Activated T-helper 2 cell treated with anti-CD3 and anti-CD28 coated beads, Interferon-gamma antibody, Interleukin-2, Interleukin-4, amounts not matched to agents 10 μg/mL and 5 μg/mL and 100 μg/mL, durations not matched to agents 14 hours and 24 hours and 36 hours (primary cell): ENCODE measurements at regions of chr17 and their contacts with region 1.

Region 1: GRCh38 chr17:77666881-77667395 is 291.6 kb upstream of the TNRC6C start:
- DNase-seq: peak; percentile 86
- H3K4me3 Mint-ChIP-seq: peak overlapping the region; percentile 88
- H3K27ac Mint-ChIP-seq: peak overlapping the region; percentile 98
- H3K4me1 Mint-ChIP-seq: peaks cover 47% of the 10 kb centered on the region
- H3K27me3 Mint-ChIP-seq: no peaks in the 10 kb centered on the region

Region 2: GRCh38 chr17:77609553-77610517 is 57.1 kb before region 1 on chr17:
- intact Hi-C with region 1: loop called (anchors 5 kb)
- DNase-seq: peak; percentile 67
- H3K4me3 Mint-ChIP-seq: no peak overlapping the region
- H3K27ac Mint-ChIP-seq: peak overlapping the region; percentile 84
- H3K4me1 Mint-ChIP-seq: peaks cover 21% of the 10 kb centered on the region
- H3K27me3 Mint-ChIP-seq: peaks cover 6% of the 10 kb centered on the region

Region 3: DNA sequence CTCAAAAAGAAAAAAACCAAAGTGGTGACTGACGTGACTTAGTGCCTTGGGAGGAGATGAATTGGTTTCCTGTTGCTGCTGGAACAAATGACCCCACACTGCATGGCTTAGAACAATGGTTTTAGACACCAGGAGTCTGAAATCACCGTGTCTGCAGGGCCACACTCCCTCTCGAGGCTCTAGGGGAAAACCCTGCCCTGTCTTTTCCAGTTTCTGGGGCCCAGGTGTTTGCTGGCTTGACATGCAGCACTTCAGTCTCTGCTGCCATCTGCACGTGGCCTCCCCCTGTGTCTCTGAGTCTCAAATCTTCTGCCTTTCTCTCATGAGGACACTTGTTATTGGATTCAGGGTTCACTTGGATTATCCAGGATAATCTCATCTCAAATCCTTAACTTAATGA is 32.2 kb before region 1 on chr17:
- intact Hi-C with region 1: loop called (anchors 1 kb)
- DNase-seq: peak; percentile 35
- H3K4me3 Mint-ChIP-seq: no peak overlapping the region
- H3K27ac Mint-ChIP-seq: peak overlapping the region; percentile 57
- H3K4me1 Mint-ChIP-seq: peaks cover 24% of the 10 kb centered on the region
- H3K27me3 Mint-ChIP-seq: no peaks in the 10 kb centered on the region

Region 4: DNA sequence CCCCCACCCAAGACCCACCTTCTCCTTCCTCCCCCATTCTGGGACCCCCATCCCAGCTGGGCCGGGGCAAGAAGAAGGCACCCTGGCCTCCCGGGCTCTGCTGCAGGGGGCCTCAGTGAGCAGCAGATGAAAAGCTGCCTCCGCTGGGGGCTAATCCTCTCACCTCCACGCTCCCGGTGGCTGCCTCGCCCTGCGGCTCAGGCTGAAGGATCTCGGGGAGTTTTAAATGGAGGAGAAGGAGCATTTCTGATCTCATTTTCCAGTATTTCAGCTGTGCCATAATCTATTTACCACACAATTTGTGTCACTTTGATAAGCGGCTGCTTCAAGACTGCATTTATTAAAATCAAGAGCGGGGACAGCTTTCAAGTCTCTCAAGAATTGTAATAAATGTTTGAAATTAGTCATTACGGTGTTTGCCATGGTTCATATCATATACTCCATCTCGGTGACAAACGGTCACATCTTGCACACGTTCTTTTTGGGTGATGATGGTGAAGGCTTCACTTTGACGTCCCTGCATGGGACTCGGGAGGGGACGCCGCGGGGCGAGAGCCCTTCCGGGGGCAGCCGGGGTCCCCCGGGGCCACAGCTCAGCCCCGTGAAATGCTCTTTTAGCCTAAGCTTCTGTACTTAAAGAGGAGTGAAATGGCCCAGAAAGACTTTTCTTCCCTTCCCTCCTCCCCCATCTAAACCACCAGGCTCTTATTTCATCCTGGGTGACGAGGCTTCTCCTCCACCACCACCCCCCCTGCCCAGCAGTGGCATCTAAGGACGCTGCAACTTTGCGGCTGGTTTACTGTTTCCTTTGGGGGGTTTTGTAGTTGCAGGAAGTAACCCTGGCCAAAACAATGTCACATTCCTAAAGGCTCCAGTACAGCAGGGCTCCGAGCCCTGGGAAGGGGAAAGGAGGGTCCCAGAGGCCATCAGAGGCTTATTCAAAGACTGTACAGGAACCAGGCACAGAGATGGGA is 21.6 kb before region 1 on chr17:
- intact Hi-C with region 1: loop called (anchors 1 kb)
- DNase-seq: peak; percentile 71
- H3K4me3 Mint-ChIP-seq: peak overlapping the region; percentile 60
- H3K27ac Mint-ChIP-seq: peak overlapping the region; percentile 95
- H3K4me1 Mint-ChIP-seq: peaks cover 45% of the 10 kb centered on the region
- H3K27me3 Mint-ChIP-seq: no peaks in the 10 kb centered on the region

Region 5: GRCh38 chr17:77692571-77693161 is 25.7 kb after region 1 on chr17:
- intact Hi-C with region 1: loop called (anchors 2 kb)
- DNase-seq: no peak
- H3K4me3 Mint-ChIP-seq: no peak overlapping the region
- H3K27ac Mint-ChIP-seq: no peak overlapping the region
- H3K4me1 Mint-ChIP-seq: peaks cover 25% of the 10 kb centered on the region
- H3K27me3 Mint-ChIP-seq: peaks cover 16% of the 10 kb centered on the region

Region 6: DNA sequence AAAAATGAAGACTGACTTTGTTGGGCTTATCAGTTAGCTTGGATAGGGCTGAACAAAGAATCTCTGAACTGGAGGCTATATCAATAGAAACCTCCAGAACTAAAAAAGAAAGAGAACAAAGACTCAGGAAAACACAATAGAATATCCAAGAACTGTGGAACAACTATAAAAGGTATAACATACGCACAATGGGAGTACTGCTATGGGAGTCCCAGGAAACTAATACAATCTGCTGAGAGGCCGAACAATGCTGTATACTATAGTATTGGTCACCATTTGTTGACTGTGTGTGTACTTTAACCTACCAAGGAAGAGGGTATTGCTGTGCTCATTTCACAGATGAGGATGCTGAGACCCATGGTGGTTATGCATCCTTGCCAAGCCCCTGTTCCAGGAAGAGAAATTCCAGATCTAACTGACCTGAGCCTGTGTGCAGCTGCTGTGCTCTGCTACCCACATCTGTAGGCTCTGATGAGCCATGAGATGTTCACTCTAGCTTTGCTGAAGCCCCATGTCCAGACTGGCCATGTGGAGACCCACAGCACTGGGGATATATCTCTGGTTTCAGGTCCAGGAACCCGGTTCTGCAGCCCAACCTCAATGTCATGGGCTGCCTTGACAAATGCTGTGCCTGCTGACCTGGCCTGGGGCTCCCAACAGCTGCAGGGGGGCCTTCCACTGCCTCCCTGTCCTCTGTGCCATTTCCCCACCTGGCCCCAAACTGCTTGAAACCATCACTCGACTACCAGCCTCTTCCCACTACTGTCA is 37.3 kb after region 1 on chr17:
- intact Hi-C with region 1: no loop called
- DNase-seq: no peak
- H3K4me3 Mint-ChIP-seq: no peak overlapping the region
- H3K27ac Mint-ChIP-seq: no peak overlapping the region
- H3K4me1 Mint-ChIP-seq: no peaks in the 10 kb centered on the region
- H3K27me3 Mint-ChIP-seq: peaks cover 5% of the 10 kb centered on the region

Region 7: DNA sequence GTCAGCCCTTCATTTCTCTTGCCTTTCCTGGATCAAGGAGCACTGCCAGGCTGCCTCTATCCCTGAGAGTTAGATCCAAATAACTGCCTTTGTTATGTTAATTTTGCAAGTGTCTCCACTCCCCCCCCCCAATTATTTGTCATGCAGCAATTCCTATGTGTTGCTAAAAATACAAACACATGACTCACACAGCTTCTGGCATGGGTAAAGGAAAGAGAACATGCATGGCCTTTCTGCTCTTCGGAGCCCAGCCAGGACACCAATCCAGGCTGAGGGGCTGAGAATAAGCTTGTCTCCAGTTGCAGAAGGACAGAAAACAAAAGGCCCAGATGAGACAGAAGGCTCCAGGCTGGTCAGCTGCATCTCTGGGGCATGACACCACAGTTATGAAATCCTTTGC is 143.6 kb after region 1 on chr17:
- intact Hi-C with region 1: no loop called
- DNase-seq: no peak
- H3K4me3 Mint-ChIP-seq: no peak overlapping the region
- H3K27ac Mint-ChIP-seq: no peak overlapping the region
- H3K4me1 Mint-ChIP-seq: no peaks in the 10 kb centered on the region
- H3K27me3 Mint-ChIP-seq: peaks cover 5% of the 10 kb centered on the region

Region 8: DNA sequence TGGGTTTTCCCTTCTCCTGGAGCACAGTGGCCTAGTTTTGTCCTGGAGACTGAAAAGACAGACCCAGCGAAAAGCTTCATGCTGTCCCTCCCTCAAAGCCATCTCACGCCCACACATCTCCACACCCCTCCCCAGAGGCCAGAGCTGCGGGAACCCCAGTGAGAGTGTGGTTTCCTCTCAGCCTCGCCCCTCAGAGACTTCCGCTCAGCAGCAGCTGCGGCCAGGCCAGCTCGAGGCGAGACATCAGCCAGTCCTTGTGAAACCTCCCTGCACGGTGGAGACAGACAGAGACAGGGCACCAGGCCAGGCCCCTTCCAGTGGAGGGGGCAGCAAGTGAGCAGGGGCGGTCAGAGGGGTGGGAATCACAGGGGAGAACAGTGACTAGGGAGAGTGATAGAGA is 214.6 kb after region 1 on chr17:
- intact Hi-C with region 1: loop called (anchors 5 kb)
- DNase-seq: peak; percentile 81
- H3K4me3 Mint-ChIP-seq: peak overlapping the region; percentile 77
- H3K27ac Mint-ChIP-seq: peak overlapping the region; percentile 93
- H3K4me1 Mint-ChIP-seq: peaks cover 42% of the 10 kb centered on the region
- H3K27me3 Mint-ChIP-seq: peaks cover 6% of the 10 kb centered on the region

Region 9: DNA sequence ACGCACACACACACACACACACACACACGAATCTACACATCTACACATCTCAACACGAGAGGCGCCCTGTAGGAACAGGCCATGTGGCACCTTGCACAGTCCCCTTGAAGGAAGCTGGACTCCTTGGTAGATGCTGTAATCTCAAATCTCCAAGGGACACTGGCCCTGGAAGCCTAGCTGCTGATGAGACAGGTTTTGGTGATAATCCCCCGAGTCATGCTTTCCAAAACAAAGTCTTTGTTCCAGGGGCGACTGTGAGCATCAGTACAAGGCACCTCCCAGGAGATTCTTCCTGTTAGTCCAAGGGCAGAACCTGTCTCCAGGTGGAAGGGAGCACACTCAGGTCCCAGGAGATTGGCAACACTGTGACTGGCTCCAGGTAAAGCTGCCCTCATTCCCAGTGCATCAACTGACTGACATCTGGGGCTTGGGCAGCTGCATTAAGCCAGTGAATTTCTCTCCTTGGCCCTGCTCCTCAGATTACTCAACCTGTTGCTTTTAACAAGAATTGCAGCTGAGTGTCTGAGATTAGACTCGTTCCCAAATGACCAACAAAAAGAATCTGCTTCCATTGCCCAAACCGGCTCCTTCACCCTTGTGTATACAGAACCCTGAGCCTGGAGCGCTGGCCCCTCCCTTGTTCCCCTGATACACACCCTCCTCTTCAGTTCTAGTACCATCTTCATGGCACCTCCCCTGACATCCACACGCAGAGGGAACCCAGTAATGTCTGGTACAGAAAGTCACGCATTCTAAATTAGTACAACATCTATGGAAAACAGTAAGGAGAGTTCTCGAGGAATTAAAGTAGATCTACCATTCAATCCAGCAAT is 277.7 kb after region 1 on chr17:
- intact Hi-C with region 1: no loop called
- DNase-seq: no peak
- H3K4me3 Mint-ChIP-seq: no peak overlapping the region
- H3K27ac Mint-ChIP-seq: no peak overlapping the region
- H3K4me1 Mint-ChIP-seq: no peaks in the 10 kb centered on the region
- H3K27me3 Mint-ChIP-seq: peaks cover 37% of the 10 kb centered on the region

Region 10: GRCh38 chr17:77957857-77958715 is 291.1 kb after region 1 on chr17 and contains the start of gene TNRC6C:
- intact Hi-C with region 1: loop called (anchors 10 kb)
- DNase-seq: peak; percentile 99
- H3K4me3 Mint-ChIP-seq: peak within 1 kb of the TSS; percentile 90
- H3K27ac Mint-ChIP-seq: peak within 1 kb of the TSS; percentile 76
- H3K4me1 Mint-ChIP-seq: peaks cover 35% of the 10 kb centered on the region
- H3K27me3 Mint-ChIP-seq: peaks cover 39% of the 10 kb centered on the region
- total RNA-seq, gene TNRC6C: 18.4 and 25.0 TPM in 2 replicates